ENCODE measurements at regions of chr9 and their contacts with region 1.

Region 1: DNA sequence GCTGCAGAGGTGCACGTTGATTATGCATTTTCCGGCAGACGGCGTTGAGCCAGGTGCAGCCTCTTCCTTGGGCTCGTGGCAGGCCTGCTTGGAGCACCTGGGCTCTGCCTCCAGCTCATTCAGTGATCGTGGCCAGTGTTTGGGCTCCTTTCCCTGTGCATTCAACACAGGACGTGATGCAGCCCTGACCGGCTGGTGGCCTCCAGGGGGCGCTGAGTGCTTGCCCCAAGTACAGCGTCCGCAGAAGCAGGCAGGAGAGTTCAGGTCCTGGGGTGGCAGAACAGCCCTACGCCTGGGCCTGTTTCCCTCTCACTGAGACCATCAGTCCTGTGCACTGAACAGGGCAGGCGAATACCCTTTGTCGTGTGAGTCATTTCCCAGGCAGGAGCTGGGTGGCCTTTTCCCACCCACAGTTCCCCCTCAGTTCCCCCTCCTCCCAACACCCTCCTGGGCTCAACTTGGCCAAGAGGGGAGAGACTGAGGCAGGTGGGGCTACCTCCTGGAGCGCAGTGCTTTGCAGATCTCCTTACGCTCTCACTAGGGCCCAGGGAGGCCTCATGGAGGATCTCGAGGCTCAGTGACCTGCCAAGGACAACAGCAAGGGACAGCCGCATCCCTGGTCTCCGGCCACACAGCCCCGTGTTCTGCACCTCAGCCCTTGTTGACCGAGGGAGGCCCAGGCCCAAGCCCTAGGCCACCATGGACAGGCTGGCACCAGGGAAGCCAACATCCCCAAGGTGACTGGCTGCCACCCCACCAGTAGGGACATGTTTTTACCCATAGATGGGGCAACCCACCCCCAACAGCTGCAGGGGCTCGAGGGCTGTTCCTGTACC is 52.9 kb downstream of the LRSAM1 start:
- DNase-seq: peak; percentile 79
- H3K4me3 ChIP-seq: no peak overlapping the region
- H3K27ac ChIP-seq: no peak overlapping the region
- H3K4me1 ChIP-seq: no peaks in the 10 kb centered on the region
- H3K27me3 ChIP-seq: no peaks in the 10 kb centered on the region
- CTCF ChIP-seq: peak; percentile 91

Region 2: GRCh38 chr9:127269440-127269839 is 234.7 kb before region 1 on chr9:
- CTCF ChIA-PET with region 1: interaction called, 10 read pairs
- POLR2A ChIA-PET with region 1: no interaction called
- intact Hi-C with region 1: no loop called
- DNase-seq: no peak
- H3K4me3 ChIP-seq: no peak overlapping the region
- H3K27ac ChIP-seq: no peak overlapping the region
- H3K4me1 ChIP-seq: peaks cover 5% of the 10 kb centered on the region
- H3K27me3 ChIP-seq: no peaks in the 10 kb centered on the region
- CTCF ChIP-seq: no peak

Region 3: DNA sequence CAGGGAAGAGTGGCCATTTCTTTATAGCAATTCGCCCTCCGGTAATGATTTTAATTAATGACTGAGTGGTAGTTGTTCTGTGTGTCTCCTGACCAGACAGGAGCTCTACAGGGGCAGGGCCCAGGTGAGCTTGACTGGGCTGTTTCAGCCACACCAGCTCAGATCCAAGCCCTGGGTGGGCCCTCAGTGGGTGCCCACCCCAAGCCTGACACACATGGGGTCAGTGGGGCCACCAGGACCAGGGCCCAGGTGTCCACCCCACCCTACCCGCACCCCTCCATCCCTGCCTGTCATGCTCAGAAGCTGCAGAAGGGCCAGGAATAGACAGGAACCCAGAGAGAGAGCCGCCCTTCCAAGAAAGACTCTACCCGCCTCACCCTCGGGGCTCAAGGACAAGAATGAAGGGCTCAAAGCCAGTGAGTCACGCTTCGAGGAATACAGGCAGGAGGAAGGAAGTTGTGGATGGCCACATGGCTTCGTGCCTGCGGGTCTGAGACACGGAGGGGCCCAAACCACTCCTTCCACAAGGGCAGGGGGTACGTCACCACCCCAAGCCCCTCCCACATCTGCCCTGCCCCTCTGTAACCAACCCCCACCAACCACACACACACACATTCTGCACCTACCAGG is 51.7 kb after region 1 on chr9:
- CTCF ChIA-PET with region 1: no interaction called
- POLR2A ChIA-PET with region 1: no interaction called
- intact Hi-C with region 1: no loop called
- DNase-seq: peak; percentile 82
- H3K4me3 ChIP-seq: no peak overlapping the region
- H3K27ac ChIP-seq: peak overlapping the region; percentile 54
- H3K4me1 ChIP-seq: peaks cover 47% of the 10 kb centered on the region
- H3K27me3 ChIP-seq: no peaks in the 10 kb centered on the region
- CTCF ChIP-seq: no peak

Region 4: GRCh38 chr9:127734747-127735529 is 230.8 kb after region 1 on chr9 and contains the start of gene TOR2A:
- CTCF ChIA-PET with region 1: interaction called, 6 read pairs
- POLR2A ChIA-PET with region 1: no interaction called
- intact Hi-C with region 1: loop called (anchors 1 kb)
- DNase-seq: peak; percentile 99
- H3K4me3 ChIP-seq: peak within 1 kb of the TSS; percentile 69
- H3K27ac ChIP-seq: peak within 1 kb of the TSS; percentile 83
- H3K4me1 ChIP-seq: peaks cover 10% of the 10 kb centered on the region
- H3K27me3 ChIP-seq: no peaks in the 10 kb centered on the region
- CTCF ChIP-seq: peak; percentile 98
- total RNA-seq, gene TOR2A: 9.1 and 9.2 TPM in 2 replicates